Activated B cell treated with CpG ODN at 0.5 μM for 24 hours (primary cell): ENCODE measurements at regions of chr16 and their contacts with region 1.

Region 1: GRCh38 chr16:85717393-85718121 is 28.8 kb upstream of the GINS2 start:
- DNase-seq: peak; percentile 38
- ATAC-seq: peak; percentile 57
- H3K4me3 Mint-ChIP-seq: no peak overlapping the region
- H3K27ac Mint-ChIP-seq: no peak overlapping the region
- H3K4me1 Mint-ChIP-seq: peaks cover 18% of the 10 kb centered on the region
- H3K27me3 Mint-ChIP-seq: no peaks in the 10 kb centered on the region
- CTCF ChIP-seq: no peak

Region 2: GRCh38 chr16:85296859-85297660 is 420.5 kb before region 1 on chr16:
- CTCF ChIA-PET with region 1: no interaction called
- POLR2A ChIA-PET with region 1: no interaction called
- intact Hi-C with region 1: loop called (anchors 1 kb)
- DNase-seq: no peak
- ATAC-seq: peak; percentile 92
- H3K4me3 Mint-ChIP-seq: no peak overlapping the region
- H3K27ac Mint-ChIP-seq: no peak overlapping the region
- H3K4me1 Mint-ChIP-seq: no peaks in the 10 kb centered on the region
- H3K27me3 Mint-ChIP-seq: peaks cover 8% of the 10 kb centered on the region
- CTCF ChIP-seq: no peak

Region 3: GRCh38 chr16:85393674-85394483 is 323.7 kb before region 1 on chr16:
- CTCF ChIA-PET with region 1: no interaction called
- POLR2A ChIA-PET with region 1: no interaction called
- intact Hi-C with region 1: loop called (anchors 5 kb)
- DNase-seq: peak; percentile 65
- ATAC-seq: peak; percentile 83
- H3K4me3 Mint-ChIP-seq: no peak overlapping the region
- H3K27ac Mint-ChIP-seq: no peak overlapping the region
- H3K4me1 Mint-ChIP-seq: no peaks in the 10 kb centered on the region
- H3K27me3 Mint-ChIP-seq: peaks cover 16% of the 10 kb centered on the region
- CTCF ChIP-seq: no peak

Region 4: GRCh38 chr16:85479972-85480751 is 237.4 kb before region 1 on chr16:
- CTCF ChIA-PET with region 1: no interaction called
- POLR2A ChIA-PET with region 1: no interaction called
- intact Hi-C with region 1: loop called (anchors 2 kb)
- DNase-seq: peak; percentile 49
- ATAC-seq: peak; percentile 68
- H3K4me3 Mint-ChIP-seq: no peak overlapping the region
- H3K27ac Mint-ChIP-seq: no peak overlapping the region
- H3K4me1 Mint-ChIP-seq: peaks cover 15% of the 10 kb centered on the region
- H3K27me3 Mint-ChIP-seq: peaks cover 15% of the 10 kb centered on the region
- CTCF ChIP-seq: no peak

Region 5: DNA sequence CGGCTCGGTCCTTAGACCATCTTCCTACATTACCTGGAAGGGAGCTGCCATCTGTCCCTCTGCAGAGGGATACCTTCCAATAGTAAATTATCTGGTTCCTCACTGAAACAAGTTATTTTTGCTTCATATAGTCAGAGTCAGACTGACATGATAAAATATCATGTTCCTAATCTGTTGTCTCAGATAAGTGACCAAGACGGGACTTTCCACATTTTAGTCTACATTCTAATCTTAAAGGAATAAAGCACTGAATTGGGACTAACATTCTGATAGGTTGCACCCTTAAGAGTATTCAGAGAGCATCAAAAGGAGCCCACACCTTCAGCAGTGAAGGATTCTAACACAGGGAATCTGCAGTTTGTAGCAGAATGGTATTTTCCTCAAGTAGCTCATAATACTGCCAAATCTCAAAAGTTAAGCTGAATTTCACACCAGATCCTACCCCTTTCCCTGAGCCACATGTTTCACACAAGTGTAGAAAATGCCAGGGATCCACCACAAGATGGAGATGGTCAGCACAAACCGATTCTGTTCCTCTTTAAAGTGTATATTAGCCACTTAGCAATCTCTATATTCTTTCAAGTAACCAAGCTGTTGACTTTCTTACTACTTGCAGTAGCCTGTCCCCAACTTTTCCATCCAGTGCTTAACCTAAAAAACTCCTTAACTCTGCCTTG is 42.2 kb before region 1 on chr16:
- CTCF ChIA-PET with region 1: interaction called, 10 read pairs
- POLR2A ChIA-PET with region 1: no interaction called
- intact Hi-C with region 1: loop called (anchors 1 kb)
- DNase-seq: no peak
- ATAC-seq: no peak
- H3K4me3 Mint-ChIP-seq: no peak overlapping the region
- H3K27ac Mint-ChIP-seq: peak overlapping the region; percentile 26
- H3K4me1 Mint-ChIP-seq: peaks cover 9% of the 10 kb centered on the region
- H3K27me3 Mint-ChIP-seq: no peaks in the 10 kb centered on the region
- CTCF ChIP-seq: no peak

Region 6: GRCh38 chr16:85799497-85800337 is 82.2 kb after region 1 on chr16 and contains the starts of genes COX4I1 and EMC8:
- CTCF ChIA-PET with region 1: interaction called, 4 read pairs
- POLR2A ChIA-PET with region 1: no interaction called
- intact Hi-C with region 1: loop called (anchors 1 kb)
- DNase-seq: peak; percentile 89
- ATAC-seq: peak; percentile 89
- H3K4me3 Mint-ChIP-seq: peak within 1 kb of the TSS; percentile 90
- H3K27ac Mint-ChIP-seq: peak within 1 kb of the TSS; percentile 84
- H3K4me1 Mint-ChIP-seq: peaks cover 53% of the 10 kb centered on the region
- H3K27me3 Mint-ChIP-seq: no peaks in the 10 kb centered on the region
- CTCF ChIP-seq: no peak
- total RNA-seq, gene COX4I1: 578 TPM in 2 replicates
- total RNA-seq, gene EMC8: 27.8 and 29.0 TPM in 2 replicates